ENCODE measurements at regions of chr4 and their contacts with region 1.

Region 1: DNA sequence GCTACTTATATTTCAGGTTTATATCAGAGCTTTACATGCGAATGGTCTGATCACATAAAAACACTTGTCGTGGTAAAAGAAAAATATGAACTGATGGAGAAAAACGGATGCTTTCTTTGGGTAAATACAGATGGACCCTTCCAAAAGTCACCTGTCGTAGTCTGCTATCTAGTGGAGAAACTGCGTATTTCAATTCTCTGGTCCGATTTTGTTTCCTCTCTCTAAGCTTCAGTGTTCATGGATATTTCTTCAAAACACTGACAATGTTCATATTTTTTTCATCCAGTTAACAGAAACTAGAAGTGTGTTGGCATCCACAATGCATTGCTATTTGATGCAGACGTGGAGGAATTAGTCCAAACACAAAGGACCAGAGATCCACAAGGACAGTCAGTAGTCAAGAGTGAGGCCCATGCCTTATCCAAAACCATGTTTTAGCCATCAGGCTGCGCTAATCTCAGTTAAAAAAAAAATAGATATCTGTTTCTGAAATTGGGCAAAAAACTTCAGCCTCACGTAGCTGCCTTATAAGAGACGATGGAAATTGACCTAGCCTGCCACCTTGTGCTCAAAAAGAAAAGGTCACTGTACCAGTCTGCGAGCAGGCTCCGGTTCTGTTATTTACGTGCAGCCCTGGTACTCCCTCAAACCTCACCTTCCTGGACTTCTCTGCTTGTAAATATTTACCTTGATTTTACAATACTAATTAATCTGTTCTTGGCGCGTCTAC is 16.0 kb downstream of the MEPE start:
- DNase-seq: peak; percentile 62
- ATAC-seq: peak; percentile 89
- H3K4me3 Mint-ChIP-seq: peak overlapping the region; percentile 32
- H3K27ac Mint-ChIP-seq: no peak overlapping the region
- H3K4me1 Mint-ChIP-seq: peaks cover 5% of the 10 kb centered on the region
- H3K27me3 Mint-ChIP-seq: peaks cover 19% of the 10 kb centered on the region
- CTCF ChIP-seq: peak; percentile 66

Region 2: DNA sequence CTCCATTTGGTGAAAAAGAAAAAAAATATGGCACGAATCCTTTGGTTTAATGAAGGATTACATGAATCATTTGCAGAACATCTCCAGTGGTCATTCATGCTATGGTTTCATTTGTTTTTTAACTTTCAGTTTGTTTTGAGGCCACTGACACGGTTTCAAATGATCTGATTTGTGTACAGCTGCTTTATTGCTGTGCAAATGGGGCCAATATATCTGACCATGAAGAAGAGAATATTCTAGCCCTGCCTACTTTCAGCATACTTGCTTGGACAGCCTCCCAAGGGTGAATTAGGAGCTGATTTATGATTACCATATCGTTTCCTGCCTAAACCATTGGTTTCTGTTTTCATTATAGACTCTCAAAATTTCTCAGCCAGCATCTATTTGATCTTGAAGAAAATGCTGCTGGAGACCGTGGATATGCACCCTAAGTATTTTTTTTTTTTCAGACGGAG is 350.3 kb before region 1 on chr4:
- CTCF ChIA-PET with region 1: interaction called, 11 read pairs
- POLR2A ChIA-PET with region 1: no interaction called
- intact Hi-C with region 1: no loop called
- DNase-seq: no peak
- ATAC-seq: peak; percentile 30
- H3K4me3 Mint-ChIP-seq: no peak overlapping the region
- H3K27ac Mint-ChIP-seq: no peak overlapping the region
- H3K4me1 Mint-ChIP-seq: peaks cover 8% of the 10 kb centered on the region
- H3K27me3 Mint-ChIP-seq: no peaks in the 10 kb centered on the region
- CTCF ChIP-seq: no peak

Region 3: DNA sequence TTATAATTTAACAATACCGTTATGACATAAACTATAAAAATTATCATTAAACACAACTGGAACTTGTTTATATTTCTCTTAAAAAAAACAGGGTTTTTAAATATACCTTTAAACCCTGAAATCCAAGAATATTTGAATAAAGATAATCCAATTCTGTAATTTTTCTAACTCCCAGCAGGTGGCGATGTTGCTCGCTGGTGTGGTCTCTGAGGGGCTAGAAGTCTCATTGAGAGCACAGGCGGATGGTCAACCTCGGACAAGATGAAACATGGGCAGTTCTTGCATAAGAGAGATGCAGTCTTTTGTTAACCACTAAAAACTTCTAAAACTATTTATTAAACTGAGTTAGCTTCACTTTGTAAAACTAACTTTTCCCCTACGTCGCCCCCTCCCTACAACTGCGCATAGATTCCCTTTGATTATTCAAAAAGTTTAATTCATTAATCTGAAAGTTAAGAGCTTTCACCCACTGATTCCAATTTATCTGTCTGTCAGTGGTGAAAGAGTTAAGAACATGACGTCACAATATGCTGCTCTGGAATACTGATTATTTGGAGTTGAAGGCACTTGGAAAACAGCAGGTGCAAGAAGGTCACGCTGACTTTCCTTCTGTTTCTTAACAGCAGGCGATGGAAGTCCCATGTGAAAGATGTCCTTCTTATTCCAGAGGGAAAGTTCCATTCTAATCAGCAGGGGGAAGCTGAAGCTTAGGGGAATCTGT is 169.2 kb before region 1 on chr4:
- CTCF ChIA-PET with region 1: interaction called, 28 read pairs
- POLR2A ChIA-PET with region 1: interaction called, 3 read pairs
- intact Hi-C with region 1: loop called (anchors 5 kb)
- DNase-seq: peak; percentile 47
- ATAC-seq: no peak
- H3K4me3 Mint-ChIP-seq: no peak overlapping the region
- H3K27ac Mint-ChIP-seq: no peak overlapping the region
- H3K4me1 Mint-ChIP-seq: no peaks in the 10 kb centered on the region
- H3K27me3 Mint-ChIP-seq: no peaks in the 10 kb centered on the region
- CTCF ChIP-seq: peak; percentile 82

Region 4: GRCh38 chr4:87973283-87974169 is 124.7 kb after region 1 on chr4:
- CTCF ChIA-PET with region 1: interaction called, 29 read pairs
- POLR2A ChIA-PET with region 1: no interaction called
- intact Hi-C with region 1: loop called (anchors 2 kb)
- DNase-seq: peak; percentile 56
- ATAC-seq: peak; percentile 77
- H3K4me3 Mint-ChIP-seq: no peak overlapping the region
- H3K27ac Mint-ChIP-seq: no peak overlapping the region
- H3K4me1 Mint-ChIP-seq: peaks cover 7% of the 10 kb centered on the region
- H3K27me3 Mint-ChIP-seq: peaks cover 32% of the 10 kb centered on the region
- CTCF ChIP-seq: peak; percentile 80

Measured in activated CD8-positive, alpha-beta T cell treated with anti-CD3 and anti-CD28 coated beads for 36 hours (primary cell).